ENCODE measurements at regions of chr5 and their contacts with region 1.

Region 1: GRCh38 chr5:95718203-95718602 is 12.9 kb upstream of the RHOBTB3 start:
- DNase-seq: peak; percentile 21
- H3K4me3 Mint-ChIP-seq: no peak overlapping the region
- H3K27ac Mint-ChIP-seq: no peak overlapping the region
- H3K4me1 Mint-ChIP-seq: peaks cover 19% of the 10 kb centered on the region
- H3K27me3 Mint-ChIP-seq: peaks cover 31% of the 10 kb centered on the region

Region 2: DNA sequence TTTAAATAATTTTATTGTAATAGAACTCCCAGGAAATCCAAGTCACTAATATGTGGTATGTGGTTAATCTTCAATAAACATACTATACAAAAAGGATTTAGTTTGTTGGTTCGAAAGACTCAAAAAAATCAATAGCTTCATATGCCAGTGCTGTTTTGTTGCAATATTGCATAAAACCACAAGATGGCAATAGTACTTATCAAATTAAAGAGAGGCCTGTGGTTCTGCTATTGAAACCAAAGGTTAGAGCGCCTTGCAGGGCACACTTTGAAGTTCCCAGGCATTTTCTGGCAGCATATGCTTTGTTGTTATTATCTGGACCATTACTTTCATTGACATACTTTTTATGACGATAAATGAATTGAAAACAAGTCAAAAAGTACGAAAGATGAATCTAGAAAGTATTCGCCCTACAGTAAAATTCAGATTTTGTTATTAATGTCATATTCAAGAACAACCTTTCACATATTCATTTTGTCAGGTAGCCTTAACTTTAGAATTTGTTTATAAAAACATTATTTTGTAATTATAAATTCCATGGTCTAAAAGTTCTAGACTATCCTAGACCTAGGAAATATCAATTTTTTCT is 749.6 kb before region 1 on chr5:
- intact Hi-C with region 1: no loop called
- DNase-seq: no peak
- H3K4me3 Mint-ChIP-seq: no peak overlapping the region
- H3K27ac Mint-ChIP-seq: no peak overlapping the region
- H3K4me1 Mint-ChIP-seq: no peaks in the 10 kb centered on the region
- H3K27me3 Mint-ChIP-seq: no peaks in the 10 kb centered on the region

Region 3: GRCh38 chr5:95591490-95591901 is 126.7 kb before region 1 on chr5:
- intact Hi-C with region 1: loop called (anchors 1 kb)
- DNase-seq: no peak
- H3K4me3 Mint-ChIP-seq: no peak overlapping the region
- H3K27ac Mint-ChIP-seq: peak overlapping the region; percentile 65
- H3K4me1 Mint-ChIP-seq: peaks cover 30% of the 10 kb centered on the region
- H3K27me3 Mint-ChIP-seq: no peaks in the 10 kb centered on the region

Region 4: DNA sequence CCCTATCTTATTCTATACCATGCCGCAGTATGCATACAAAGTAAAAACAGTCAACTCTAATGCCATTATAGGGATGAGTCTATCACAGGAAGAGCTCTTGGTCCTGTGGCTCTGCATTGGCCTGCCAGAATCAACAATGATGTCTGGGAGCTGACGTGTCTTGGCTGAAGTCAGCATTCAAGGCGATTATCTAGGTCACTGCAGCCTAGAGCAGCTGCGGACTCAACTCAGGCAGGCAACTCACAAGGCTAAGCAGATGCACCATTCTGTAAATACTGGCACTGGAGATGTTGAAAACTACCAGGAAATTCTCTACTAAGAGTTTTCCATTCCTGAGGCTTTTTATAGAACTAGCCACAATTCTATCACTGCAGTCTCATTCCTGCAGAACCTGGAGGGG is 48.7 kb before region 1 on chr5:
- intact Hi-C with region 1: loop called (anchors 2 kb)
- DNase-seq: no peak
- H3K4me3 Mint-ChIP-seq: no peak overlapping the region
- H3K27ac Mint-ChIP-seq: no peak overlapping the region
- H3K4me1 Mint-ChIP-seq: peaks cover 4% of the 10 kb centered on the region
- H3K27me3 Mint-ChIP-seq: peaks cover 20% of the 10 kb centered on the region

Region 5: GRCh38 chr5:95686651-95687050 is 31.6 kb before region 1 on chr5:
- intact Hi-C with region 1: no loop called
- DNase-seq: no peak
- H3K4me3 Mint-ChIP-seq: no peak overlapping the region
- H3K27ac Mint-ChIP-seq: no peak overlapping the region
- H3K4me1 Mint-ChIP-seq: no peaks in the 10 kb centered on the region
- H3K27me3 Mint-ChIP-seq: peaks cover 41% of the 10 kb centered on the region

Region 6: DNA sequence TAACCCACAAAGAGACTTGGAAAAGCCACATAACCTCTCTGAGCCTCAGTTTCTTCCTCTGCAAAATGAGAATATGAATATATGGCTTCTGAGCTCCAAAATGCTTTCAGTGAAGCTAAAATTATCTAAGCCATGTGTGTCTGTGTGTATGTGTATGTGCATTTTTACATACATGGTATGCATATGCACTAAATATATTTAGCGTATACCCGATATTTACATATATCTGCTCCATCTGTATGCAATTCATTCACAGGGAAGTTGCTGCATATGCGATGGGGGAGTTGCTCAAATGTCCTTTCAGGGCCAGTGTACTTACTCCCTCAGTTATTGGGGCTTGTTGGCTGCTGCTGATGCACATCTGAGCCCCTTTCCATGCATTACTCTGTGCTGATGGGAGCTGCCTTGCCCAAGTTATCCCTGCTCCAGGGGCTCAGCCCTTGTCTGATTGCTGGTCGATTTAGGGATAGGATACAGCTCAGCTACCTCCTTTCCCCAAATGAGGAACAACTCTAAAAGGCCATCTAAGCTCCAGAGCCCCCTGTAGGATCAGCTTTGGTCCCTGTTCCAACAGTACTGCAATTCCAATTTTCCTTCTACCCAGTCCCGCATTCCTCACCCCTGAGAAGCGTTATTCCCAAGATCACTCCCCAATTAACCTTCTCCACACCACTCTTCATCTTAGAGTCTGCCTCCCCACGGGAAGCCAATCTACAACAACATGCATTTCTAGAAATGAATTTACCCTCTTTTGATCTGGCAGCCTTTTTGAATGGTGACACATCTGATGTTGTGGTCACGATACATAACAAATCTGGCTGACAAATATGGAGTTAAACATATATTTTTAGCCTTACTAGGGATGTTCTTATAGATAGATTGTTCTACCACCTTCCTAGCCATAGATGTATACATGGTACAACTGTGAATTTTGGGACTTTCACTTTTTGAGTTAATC is 28.8 kb after region 1 on chr5:
- intact Hi-C with region 1: loop called (anchors 2 kb)
- DNase-seq: no peak
- H3K4me3 Mint-ChIP-seq: no peak overlapping the region
- H3K27ac Mint-ChIP-seq: no peak overlapping the region
- H3K4me1 Mint-ChIP-seq: peaks cover 12% of the 10 kb centered on the region
- H3K27me3 Mint-ChIP-seq: peaks cover 26% of the 10 kb centered on the region

Region 7: DNA sequence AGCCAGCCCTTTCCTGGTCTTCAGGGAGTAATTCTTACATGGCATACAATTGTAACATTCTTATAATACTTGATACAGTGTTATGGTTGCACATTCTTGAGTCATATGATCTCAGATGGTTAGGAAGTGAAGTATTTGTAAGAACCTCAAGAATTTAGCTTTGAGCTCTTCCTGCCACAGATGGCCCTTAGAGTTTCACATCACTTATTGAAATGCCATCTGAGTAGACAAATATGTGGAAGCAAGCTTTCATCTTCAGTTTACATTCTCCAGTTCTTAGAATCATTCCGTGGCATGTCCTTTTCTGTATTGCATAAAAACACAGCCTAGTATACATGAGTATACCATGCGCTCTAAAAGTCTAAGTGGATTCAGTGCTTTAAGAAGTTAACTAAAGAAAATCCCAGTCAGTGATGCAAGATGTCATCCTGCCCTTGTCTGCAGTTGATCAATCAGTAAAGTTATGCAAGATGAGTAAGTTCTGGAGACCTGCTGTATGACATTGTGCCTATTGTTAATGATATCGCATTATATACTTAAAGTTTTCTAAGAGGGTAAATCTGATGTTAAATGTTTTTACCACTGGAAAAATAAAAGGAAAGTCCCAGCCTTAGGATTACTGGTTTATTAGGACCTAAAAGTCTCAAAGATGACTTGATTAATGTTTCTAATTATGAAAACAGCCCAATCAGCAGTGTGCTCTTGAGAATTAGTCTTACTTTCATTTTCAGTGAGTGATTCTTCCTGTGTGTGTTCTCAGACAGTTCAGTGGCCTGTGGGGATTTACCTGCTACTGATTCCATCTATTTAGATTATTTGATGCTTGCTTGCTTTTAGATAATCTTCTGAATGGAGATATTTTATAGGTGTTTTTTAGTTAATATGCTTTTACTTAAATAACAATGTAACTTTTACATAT is 42.3 kb after region 1 on chr5:
- intact Hi-C with region 1: loop called (anchors 1 kb)
- DNase-seq: no peak
- H3K4me3 Mint-ChIP-seq: peak overlapping the region; percentile 51
- H3K27ac Mint-ChIP-seq: peak overlapping the region; percentile 58
- H3K4me1 Mint-ChIP-seq: peaks cover 28% of the 10 kb centered on the region
- H3K27me3 Mint-ChIP-seq: peaks cover 58% of the 10 kb centered on the region

Region 8: GRCh38 chr5:95822542-95823181 is 104.5 kb after region 1 on chr5 and contains the start of gene GLRX:
- intact Hi-C with region 1: loop called (anchors 5 kb)
- DNase-seq: peak; percentile 56
- H3K4me3 Mint-ChIP-seq: peak within 1 kb of the TSS; percentile 91
- H3K27ac Mint-ChIP-seq: peak within 1 kb of the TSS; percentile 80
- H3K4me1 Mint-ChIP-seq: peaks cover 55% of the 10 kb centered on the region
- H3K27me3 Mint-ChIP-seq: no peaks in the 10 kb centered on the region
- total RNA-seq, gene GLRX: 14.9 and 18.5 TPM in 2 replicates

Measured in activated T-helper 2 cell treated with anti-CD3 and anti-CD28 coated beads, Interferon-gamma antibody, Interleukin-2, Interleukin-4, amounts not matched to agents 10 μg/mL and 5 μg/mL and 100 μg/mL, durations not matched to agents 14 hours and 24 hours and 36 hours (primary cell).